ENCODE measurements at regions of chr18 and their contacts with region 1.

Region 1: DNA sequence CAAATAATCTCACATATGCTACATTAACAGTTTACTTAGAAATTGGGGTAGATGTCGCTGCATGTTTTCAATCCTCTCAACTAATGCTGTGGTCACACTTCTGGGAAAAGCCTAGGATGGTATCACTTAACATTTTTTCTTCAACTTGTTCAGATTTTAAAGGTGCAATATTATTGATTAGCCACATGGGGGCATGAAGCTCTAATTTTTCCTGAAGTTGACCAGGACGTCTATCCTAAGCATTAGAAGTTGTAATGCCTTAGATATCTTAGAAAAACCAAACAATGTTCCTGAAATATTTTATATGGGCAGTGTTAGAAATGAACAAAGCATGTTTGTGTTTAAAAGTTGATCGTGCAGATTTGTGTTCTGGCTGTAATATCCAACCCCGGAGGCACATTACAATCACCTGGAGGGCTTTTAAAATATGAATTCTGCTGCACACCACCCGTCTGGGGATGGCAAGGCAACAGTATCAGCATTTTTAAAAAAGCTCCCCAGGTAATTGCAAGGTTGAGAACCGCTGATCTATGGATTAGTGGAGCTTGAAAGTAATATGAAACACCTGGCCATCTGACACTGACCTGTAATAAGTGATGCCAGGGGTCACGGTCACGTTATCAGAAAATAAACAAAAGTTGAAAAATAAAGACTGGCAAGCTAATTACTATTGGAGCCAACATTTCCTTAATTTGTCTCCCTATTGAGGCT is 100.5 kb upstream of the LMAN1 start:
- DNase-seq: no peak
- H3K4me3 ChIP-seq: no peak overlapping the region
- H3K4me3 Mint-ChIP-seq: no peak overlapping the region
- H3K27ac Mint-ChIP-seq: no peak overlapping the region
- H3K4me1 ChIP-seq: no peaks in the 10 kb centered on the region
- H3K4me1 Mint-ChIP-seq: no peaks in the 10 kb centered on the region
- H3K27me3 ChIP-seq: no peaks in the 10 kb centered on the region
- H3K27me3 Mint-ChIP-seq: peaks cover 7% of the 10 kb centered on the region
- CTCF ChIP-seq: peak in 1 of 2 experiments; percentile 46

Region 2: DNA sequence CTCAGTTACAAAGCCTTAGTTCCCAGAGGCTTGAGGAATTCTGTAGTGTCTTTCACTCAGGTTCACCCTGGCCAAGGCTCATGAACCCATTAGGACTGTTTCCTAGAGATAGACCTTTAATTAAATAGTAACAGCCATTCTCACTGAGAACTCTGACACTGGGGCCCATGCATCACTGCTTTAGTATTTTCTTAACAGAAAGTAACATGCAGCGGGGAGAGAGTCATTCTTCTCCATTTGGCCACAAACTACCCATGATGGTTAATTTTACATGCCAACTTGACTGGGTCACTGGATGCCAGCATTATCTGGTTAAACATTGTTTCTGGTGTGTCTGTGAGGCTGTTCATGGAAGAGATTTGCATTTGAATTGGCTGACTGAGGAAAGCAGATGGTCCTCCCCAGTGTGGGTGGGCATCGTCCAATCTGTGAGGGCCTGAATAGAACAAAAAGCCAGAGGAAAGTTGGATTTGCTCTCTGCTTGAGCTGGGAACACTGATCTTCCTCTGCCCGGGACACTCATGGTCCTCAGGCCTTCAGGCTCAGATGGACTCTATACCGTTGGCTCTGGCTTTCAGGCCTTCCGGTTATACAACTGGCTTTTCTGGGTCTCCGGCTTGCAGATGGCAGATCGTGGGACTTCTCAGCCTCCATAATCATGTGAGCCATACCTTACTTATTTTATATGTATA is 135.4 kb before region 1 on chr18:
- CTCF ChIA-PET with region 1: no interaction called
- POLR2A ChIA-PET with region 1: no interaction called
- intact Hi-C with region 1: no loop called
- DNase-seq: no peak
- H3K4me3 ChIP-seq: no peak overlapping the region
- H3K4me3 Mint-ChIP-seq: no peak overlapping the region
- H3K27ac Mint-ChIP-seq: no peak overlapping the region
- H3K4me1 ChIP-seq: no peaks in the 10 kb centered on the region
- H3K4me1 Mint-ChIP-seq: no peaks in the 10 kb centered on the region
- H3K27me3 ChIP-seq: no peaks in the 10 kb centered on the region
- H3K27me3 Mint-ChIP-seq: no peaks in the 10 kb centered on the region
- CTCF ChIP-seq: no peak

Region 3: DNA sequence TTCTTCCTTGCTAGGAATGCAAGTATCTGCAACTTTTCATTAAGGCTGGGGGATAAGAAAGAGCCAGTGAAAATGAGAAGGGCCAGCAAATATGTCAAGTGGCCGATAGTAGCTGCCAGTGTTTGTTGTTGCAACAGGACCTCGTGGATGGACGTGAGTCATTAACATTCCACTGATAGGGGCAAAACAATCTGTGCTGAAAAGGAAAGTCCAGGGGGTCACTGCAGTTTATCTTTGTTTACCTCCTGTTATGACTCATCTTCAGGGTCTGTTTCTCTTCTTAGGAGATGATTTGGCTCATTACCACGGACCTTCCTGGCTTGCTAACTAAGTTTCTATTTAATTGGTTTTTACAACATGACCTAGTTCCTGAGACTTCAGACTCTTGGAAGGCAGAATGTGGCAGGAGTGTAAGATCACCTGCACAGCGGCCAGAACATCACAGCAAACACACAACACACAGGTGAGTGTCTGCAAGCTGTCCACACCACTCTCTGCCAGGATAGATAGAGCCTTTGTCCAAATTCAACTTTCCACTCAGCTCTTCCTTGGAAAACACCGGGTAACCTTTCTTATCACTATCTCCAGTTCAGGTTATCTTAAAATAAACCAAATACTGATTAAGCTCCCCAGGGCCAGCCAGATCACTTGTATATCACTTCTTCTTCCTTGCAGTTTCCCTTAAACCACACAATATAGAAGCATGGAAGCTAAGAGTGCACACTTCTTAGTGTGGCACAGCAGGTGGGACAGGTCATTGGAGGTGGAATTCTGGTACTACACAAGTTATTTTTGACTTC is 57.0 kb after region 1 on chr18:
- CTCF ChIA-PET with region 1: interaction called, 3 read pairs
- POLR2A ChIA-PET with region 1: no interaction called
- intact Hi-C with region 1: loop called (anchors 5 kb)
- DNase-seq: peak; percentile 65 to 70
- H3K4me3 ChIP-seq: no peak overlapping the region
- H3K4me3 Mint-ChIP-seq: no peak overlapping the region
- H3K27ac Mint-ChIP-seq: peak overlapping the region; percentile 61
- H3K4me1 ChIP-seq: peaks cover 7% of the 10 kb centered on the region
- H3K4me1 Mint-ChIP-seq: peaks cover 5% of the 10 kb centered on the region
- H3K27me3 ChIP-seq: no peaks in the 10 kb centered on the region
- H3K27me3 Mint-ChIP-seq: no peaks in the 10 kb centered on the region
- CTCF ChIP-seq: no peak